ENCODE measurements at regions of chr7 and their contacts with region 1.

Region 1: GRCh38 chr7:2354186-2354938 is at the start of gene EIF3B:
- DNase-seq: peak; percentile 89 to 93 (median 92)
- H3K4me3 ChIP-seq: peak within 1 kb of the TSS; percentile 96
- H3K27ac ChIP-seq: peak within 1 kb of the TSS; percentile 97 to 99
- H3K4me1 ChIP-seq: peaks cover 10% of the 10 kb centered on the region
- H3K27me3 ChIP-seq: no peaks in the 10 kb centered on the region
- CTCF ChIP-seq: peak in 1 of 3 donors; percentile 22
- EP300 ChIP-seq: no peak
- POLR2A ChIP-seq: peak; percentile 13
- total RNA-seq, gene EIF3B: 67.2 to 133 (median 114) TPM

Region 2: DNA sequence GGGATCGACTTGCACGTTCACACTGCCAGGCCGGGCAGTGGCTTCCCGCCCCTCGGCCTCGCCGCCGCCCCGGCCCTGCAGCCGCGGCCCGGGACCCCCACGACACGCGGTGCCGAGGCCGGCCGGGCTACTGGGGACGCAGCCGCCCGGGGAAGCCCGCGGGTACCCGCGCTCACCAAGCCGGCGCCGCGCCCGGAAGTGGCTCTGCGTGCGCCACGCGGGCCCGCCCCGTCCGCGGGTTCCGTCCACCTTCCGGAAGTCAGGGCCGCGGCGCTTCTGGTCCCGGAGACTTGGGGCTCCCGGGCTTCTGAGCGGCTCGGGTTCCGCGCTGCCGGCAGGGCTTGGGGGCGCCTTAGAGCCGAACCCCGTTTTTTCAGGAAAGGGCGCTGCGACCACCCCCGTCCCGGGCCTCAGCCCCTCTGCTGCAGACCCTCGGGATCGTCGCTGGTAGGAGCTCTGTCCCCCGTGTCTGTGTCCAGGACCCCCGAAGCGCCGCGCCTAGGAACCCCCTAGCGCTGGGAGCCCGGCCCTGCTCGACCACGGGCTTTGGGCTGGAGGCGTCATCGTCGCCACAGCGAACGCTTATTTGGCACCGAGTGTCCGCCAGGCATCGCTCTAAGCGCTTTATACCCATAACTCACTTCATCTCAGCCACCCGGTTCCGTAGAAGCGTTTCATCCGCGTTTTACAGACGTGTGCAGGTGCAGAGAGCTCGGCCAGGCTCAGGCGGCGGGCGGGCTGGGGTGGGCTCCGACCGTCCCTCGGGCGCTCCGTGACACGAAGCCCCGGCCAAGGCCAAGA is 784.3 kb before region 1 on chr7 and contains the start of gene PSMG3:
- intact Hi-C with region 1: loop called in 3 of 4 experiments (anchors 5 to 10 kb)
- DNase-seq: peak; percentile 89 to 94 (median 91)
- H3K4me3 ChIP-seq: peak within 1 kb of the TSS; percentile 87
- H3K27ac ChIP-seq: peak within 1 kb of the TSS; percentile 62 to 87
- H3K4me1 ChIP-seq: peaks cover 7% of the 10 kb centered on the region
- H3K27me3 ChIP-seq: no peaks in the 10 kb centered on the region
- CTCF ChIP-seq: peak; percentile 2 to 69 (median 51)
- EP300 ChIP-seq: no peak
- POLR2A ChIP-seq: peak; percentile 75
- total RNA-seq, gene PSMG3: 15.6 to 34.5 (median 18.6) TPM

Region 3: GRCh38 chr7:1579481-1580421 is 774.6 kb before region 1 on chr7:
- intact Hi-C with region 1: loop called in 3 of 4 experiments (anchors 5 to 10 kb)
- DNase-seq: peak; percentile 58 to 82 (median 80)
- H3K4me3 ChIP-seq: no peak overlapping the region
- H3K27ac ChIP-seq: no peak overlapping the region
- H3K4me1 ChIP-seq: no peaks in the 10 kb centered on the region
- H3K27me3 ChIP-seq: no peaks in the 10 kb centered on the region
- CTCF ChIP-seq: peak; percentile 52 to 72 (median 64)
- EP300 ChIP-seq: no peak
- POLR2A ChIP-seq: no peak

Region 4: DNA sequence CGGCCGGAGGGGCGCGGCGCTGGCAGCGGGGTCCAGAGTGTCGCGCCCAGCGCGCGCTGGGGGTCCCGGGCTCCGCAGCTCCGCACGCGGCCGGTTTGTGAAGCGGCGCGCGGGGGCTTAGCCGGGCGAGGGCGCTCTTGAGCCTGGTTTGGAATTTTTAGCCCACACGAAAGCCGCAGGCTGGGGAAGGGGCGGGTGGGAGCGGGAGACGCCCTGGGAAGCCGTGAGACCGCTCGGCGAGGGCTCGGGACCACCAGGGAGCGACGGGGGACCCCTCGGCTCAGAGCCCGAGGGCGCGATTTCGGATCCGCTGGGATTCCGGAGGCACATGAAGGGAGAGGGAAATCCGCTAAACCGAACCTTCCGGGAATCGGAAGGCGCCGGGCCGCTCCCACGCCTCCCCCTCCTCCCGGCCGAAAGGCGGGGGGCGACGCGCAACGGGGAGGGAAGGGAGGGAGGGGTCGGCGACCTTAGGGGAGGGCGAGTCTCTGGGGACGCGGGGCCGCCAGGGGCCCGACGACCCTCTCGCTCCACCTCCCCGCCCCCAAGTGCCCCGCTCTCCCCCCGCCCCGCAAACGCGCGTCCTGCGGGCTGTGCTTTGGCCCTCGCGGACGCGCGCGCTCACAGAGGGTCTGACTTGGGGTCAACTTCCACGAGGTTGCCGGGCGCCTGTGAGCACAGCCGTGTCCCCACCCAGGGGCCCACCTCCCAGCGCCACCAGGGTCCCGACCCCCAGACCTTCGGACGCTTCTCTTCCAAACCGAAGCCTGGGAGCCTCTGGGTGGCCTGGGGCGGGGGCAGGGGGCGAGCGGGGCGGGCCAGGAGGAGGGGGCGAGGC is 689.4 kb before region 1 on chr7:
- intact Hi-C with region 1: loop called (anchors 5 to 10 kb)
- DNase-seq: peak; percentile 34 to 82 (median 68)
- H3K4me3 ChIP-seq: peak overlapping the region; percentile 35
- H3K27ac ChIP-seq: no peak overlapping the region
- H3K4me1 ChIP-seq: peaks cover 5% of the 10 kb centered on the region
- H3K27me3 ChIP-seq: peaks cover 10% of the 10 kb centered on the region
- CTCF ChIP-seq: peak; percentile 20 to 56 (median 54)
- EP300 ChIP-seq: no peak
- POLR2A ChIP-seq: no peak

Region 5: GRCh38 chr7:2241580-2242540 is 112.5 kb before region 1 on chr7 and contains the starts of genes MRM2 and NUDT1:
- intact Hi-C with region 1: loop called in 2 of 4 experiments (anchors 10 kb)
- DNase-seq: peak; percentile 77 to 91 (median 86)
- H3K4me3 ChIP-seq: peak within 1 kb of the TSS; percentile 92
- H3K27ac ChIP-seq: no peak within 1 kb of the TSS
- H3K4me1 ChIP-seq: no peaks in the 10 kb centered on the region
- H3K27me3 ChIP-seq: no peaks in the 10 kb centered on the region
- CTCF ChIP-seq: no peak
- EP300 ChIP-seq: no peak
- POLR2A ChIP-seq: peak; percentile 20
- total RNA-seq, gene MRM2: 12.6 to 28.5 (median 21.4) TPM
- total RNA-seq, gene NUDT1: 8.4 to 10.0 (median 9.1) TPM

Region 6: GRCh38 chr7:2258661-2259365 is 95.5 kb before region 1 on chr7:
- intact Hi-C with region 1: loop called in 1 of 4 experiments (anchors 10 kb)
- DNase-seq: no peak
- H3K4me3 ChIP-seq: no peak overlapping the region
- H3K27ac ChIP-seq: no peak overlapping the region
- H3K4me1 ChIP-seq: no peaks in the 10 kb centered on the region
- H3K27me3 ChIP-seq: no peaks in the 10 kb centered on the region
- CTCF ChIP-seq: no peak
- EP300 ChIP-seq: no peak
- POLR2A ChIP-seq: no peak

Region 7: DNA sequence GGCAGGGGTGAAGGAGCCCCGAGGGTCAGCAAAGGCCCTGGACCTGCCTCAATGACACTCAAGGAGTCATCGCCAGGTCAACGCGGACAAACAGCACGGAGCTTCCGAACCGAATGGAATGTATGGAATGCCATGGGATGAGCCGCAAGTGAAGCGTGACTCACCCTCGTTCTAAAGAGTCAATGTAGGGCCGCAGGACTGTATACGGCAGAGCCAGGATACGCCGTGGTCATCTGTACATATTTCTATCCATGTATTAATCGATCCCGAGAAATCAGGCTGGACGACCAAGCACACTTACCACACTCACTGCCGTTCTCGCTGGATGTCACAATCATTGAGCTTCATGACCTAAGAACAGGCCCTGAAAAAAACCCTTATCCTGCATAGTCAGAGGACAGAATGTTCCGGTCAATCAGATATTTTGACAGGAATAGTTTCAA is 44.5 kb before region 1 on chr7:
- intact Hi-C with region 1: loop called in 1 of 4 experiments (anchors 2 kb)
- DNase-seq: no peak
- H3K4me3 ChIP-seq: no peak overlapping the region
- H3K27ac ChIP-seq: no peak overlapping the region
- H3K4me1 ChIP-seq: peaks cover 7% of the 10 kb centered on the region
- H3K27me3 ChIP-seq: no peaks in the 10 kb centered on the region
- CTCF ChIP-seq: no peak
- EP300 ChIP-seq: no peak
- POLR2A ChIP-seq: no peak

Region 8: DNA sequence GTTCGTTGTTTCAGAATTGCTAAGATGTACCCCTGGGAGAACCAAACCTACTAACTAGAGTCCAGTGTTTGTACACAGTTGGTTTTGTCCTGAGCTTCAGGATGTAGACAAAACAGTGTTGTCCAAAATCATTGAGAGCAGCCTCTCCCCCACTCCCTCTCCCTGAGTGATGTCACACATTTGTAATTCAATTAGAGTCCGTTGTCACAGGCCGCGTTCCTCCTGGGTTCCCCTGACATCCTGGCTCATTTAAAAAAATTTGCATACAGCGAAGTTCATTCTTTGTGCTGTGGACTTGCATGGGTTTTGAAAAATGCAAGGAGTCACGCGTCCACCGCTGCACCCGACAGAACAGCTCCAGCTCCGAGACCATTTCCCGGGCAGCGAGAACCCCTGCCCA is 111.6 kb after region 1 on chr7:
- intact Hi-C with region 1: no loop called
- DNase-seq: no peak
- H3K4me3 ChIP-seq: no peak overlapping the region
- H3K27ac ChIP-seq: no peak overlapping the region
- H3K4me1 ChIP-seq: peaks cover 2% of the 10 kb centered on the region
- H3K27me3 ChIP-seq: no peaks in the 10 kb centered on the region
- CTCF ChIP-seq: no peak
- EP300 ChIP-seq: no peak
- POLR2A ChIP-seq: no peak

Measured in ovary (tissue), 10 donors.